OCI-LY7 (cell line): ENCODE measurements at regions of chr9 and their contacts with region 1.

Region 1: GRCh38 chr9:90801583-90802289 is at the start of gene SYK:
- DNase-seq: peak; percentile 82
- H3K4me3 ChIP-seq: peak within 1 kb of the TSS; percentile 91
- H3K27ac ChIP-seq: peak within 1 kb of the TSS; percentile 95
- H3K4me1 ChIP-seq: peaks cover 50% of the 10 kb centered on the region
- CTCF ChIP-seq: no peak
- total RNA-seq, gene SYK: 106 and 112 TPM in 2 replicates

Region 2: GRCh38 chr9:89318123-89319014 is 1483.4 kb before region 1 on chr9 and contains the start of gene SECISBP2:
- CTCF ChIA-PET with region 1: no interaction called
- POLR2A ChIA-PET with region 1: no interaction called
- intact Hi-C with region 1: loop called (anchors 10 kb)
- DNase-seq: peak; percentile 95
- H3K4me3 ChIP-seq: peak within 1 kb of the TSS; percentile 77
- H3K27ac ChIP-seq: peak within 1 kb of the TSS; percentile 88
- H3K4me1 ChIP-seq: peaks cover 63% of the 10 kb centered on the region
- CTCF ChIP-seq: no peak
- total RNA-seq, gene SECISBP2: 76.1 and 77.6 TPM in 2 replicates

Region 3: DNA sequence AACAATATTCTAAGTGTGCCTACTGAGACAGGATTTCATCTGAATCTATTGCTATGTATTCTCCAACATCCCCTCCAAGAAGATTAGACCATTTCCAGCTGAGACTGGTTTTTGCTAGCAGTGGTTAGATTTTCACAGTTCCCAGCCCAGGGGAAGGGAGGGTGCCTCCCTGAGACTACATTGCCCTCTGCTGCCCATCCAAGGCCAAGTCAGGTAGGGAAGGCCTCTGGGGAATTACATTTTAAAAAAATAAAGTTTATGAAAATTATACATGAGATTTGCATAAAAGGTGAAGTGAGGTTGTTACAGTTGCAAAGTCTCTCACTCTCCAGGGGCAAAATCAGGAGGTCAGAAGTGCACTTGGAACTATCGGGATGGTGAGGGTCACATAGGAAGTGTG is 28.1 kb before region 1 on chr9:
- CTCF ChIA-PET with region 1: no interaction called
- POLR2A ChIA-PET with region 1: interaction called, 5 read pairs
- intact Hi-C with region 1: loop called (anchors 1 kb)
- DNase-seq: peak; percentile 66
- H3K4me3 ChIP-seq: no peak overlapping the region
- H3K27ac ChIP-seq: peak overlapping the region; percentile 69
- H3K4me1 ChIP-seq: peaks cover 32% of the 10 kb centered on the region
- CTCF ChIP-seq: peak; percentile 78

Region 4: DNA sequence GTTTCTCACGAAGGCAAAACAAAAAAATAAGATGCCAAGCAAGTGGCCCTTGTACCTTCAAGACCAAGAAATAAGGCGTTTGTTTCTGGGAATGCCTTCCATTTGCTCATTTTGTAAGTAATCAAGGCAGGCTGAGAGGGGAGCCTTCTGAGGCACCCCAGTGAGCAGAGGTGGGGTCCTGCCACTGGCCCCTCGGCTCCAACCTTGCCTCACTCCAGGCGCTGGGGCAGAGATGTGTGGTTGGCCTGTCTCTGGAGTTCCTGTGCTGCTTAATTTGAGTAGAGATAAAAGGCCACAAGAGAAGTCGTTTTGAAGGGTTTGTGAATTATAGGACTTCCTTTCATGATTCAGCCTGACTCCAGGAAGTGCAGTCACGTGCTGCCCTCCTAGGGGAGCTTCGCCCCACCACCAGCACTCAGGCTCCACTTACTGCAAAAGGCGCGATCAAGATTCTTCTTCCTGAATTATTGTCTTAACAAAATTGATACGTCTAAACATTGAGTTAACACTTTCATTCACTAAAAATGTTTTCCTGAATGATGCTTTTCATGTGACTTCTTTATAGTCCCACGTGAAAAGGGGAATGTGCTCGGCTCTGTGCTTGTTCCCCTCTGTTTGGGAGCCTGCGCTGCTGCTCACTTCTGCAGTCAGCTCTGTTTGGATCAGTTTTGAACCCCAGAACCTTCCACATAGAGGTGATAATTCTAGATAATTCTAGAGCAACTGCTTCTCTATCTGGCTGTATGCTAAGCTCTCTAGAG is 13.6 kb after region 1 on chr9:
- CTCF ChIA-PET with region 1: interaction called, 5 read pairs
- POLR2A ChIA-PET with region 1: interaction called, 30 read pairs
- intact Hi-C with region 1: no loop called
- DNase-seq: peak; percentile 85
- H3K4me3 ChIP-seq: peak overlapping the region; percentile 45
- H3K27ac ChIP-seq: peak overlapping the region; percentile 95
- H3K4me1 ChIP-seq: peaks cover 62% of the 10 kb centered on the region
- CTCF ChIP-seq: no peak

Region 5: DNA sequence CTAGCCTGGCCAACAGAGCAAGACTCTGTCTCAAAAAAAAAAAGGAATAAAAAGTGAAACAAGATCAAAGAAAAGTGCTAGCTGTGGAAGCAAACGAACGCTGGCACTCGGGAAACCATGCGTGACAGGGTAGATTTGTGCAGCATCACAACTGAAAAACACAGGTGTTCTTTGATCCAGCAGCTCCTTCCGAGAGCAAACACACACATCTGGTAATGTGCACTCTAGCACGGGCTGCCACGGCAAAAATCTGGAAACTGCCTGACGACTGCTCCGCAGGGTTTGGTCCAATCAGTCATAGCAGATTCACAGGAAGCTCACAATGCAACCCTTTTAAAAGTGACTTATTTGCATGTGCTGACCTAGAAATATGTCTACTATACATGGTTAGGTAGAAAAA is 79.9 kb after region 1 on chr9:
- CTCF ChIA-PET with region 1: no interaction called
- POLR2A ChIA-PET with region 1: interaction called, 3 read pairs
- intact Hi-C with region 1: loop called (anchors 2 kb)
- DNase-seq: peak; percentile 98
- H3K4me3 ChIP-seq: peak overlapping the region; percentile 40
- H3K27ac ChIP-seq: peak overlapping the region; percentile 92
- H3K4me1 ChIP-seq: peaks cover 48% of the 10 kb centered on the region
- CTCF ChIP-seq: no peak

Region 6: DNA sequence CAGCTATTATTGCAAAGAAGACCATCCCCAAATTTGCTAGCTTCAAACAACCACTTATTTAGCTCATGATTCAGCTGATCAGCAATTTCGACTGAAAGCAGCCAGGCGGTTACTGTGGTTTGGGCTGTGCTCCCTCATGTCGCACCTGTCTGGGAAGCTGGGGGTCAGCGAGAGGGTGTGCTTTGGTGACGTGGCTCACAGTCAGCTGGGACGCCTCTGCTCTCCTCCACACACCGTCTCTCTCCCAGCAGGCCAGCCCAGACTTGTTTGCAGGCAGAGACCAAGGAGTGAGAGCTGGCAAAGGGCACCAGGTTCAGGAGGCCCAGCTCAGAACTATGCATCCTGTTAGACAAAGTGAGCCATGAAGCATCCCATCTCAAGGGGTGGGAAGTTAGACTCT is 140.8 kb after region 1 on chr9:
- CTCF ChIA-PET with region 1: no interaction called
- POLR2A ChIA-PET with region 1: no interaction called
- intact Hi-C with region 1: no loop called
- DNase-seq: no peak
- H3K4me3 ChIP-seq: no peak overlapping the region
- H3K27ac ChIP-seq: no peak overlapping the region
- H3K4me1 ChIP-seq: no peaks in the 10 kb centered on the region
- CTCF ChIP-seq: no peak